IMR-90 (cell line): ENCODE measurements at regions of chr11 and their contacts with region 1.

Region 1: DNA sequence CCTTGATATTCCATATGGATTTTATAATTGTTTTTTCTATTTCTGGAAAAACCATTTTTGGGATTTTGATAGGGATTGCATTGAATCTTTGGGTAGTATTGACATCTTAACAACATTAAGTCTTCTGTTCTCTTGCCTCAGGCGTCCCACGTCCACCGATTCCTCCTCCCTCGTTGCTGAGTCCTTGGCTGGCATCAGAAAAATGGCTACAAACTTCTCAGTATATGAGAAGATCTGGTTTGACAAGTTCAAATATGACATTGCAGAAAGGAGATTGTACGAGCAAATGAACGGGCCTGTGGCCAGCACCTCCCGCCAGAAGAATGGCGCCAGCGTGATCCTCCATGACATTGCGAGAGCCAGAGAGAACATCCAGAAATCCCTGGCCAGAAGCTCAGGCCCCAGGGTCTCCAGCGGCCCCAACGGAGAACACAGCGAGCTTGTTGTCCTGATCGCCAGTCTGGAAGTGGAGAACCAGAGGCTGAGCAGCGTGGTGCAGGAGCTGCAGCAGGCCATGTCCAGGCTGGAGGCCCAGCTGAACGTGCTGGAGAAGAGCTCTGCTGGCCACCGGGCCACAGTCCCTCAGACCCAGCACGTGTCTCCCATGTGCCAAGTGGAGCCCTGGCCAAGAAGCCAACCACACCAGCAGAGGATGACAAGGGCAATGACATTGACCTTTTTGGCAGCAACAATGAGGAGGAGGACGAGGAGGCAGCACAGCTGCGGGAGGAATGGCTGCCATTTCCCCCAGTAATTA is 20.7 kb upstream of the SCGB1D1 start:
- DNase-seq: no peak
- ATAC-seq: no peak
- H3K4me3 ChIP-seq: no peak overlapping the region
- H3K27ac ChIP-seq: no peak overlapping the region
- H3K4me1 ChIP-seq: no peaks in the 10 kb centered on the region
- H3K27me3 ChIP-seq: peaks cover 26% of the 10 kb centered on the region
- CTCF ChIP-seq: no peak
- POLR2A ChIP-seq: no peak
- RAD21 ChIP-seq: no peak

Region 2: DNA sequence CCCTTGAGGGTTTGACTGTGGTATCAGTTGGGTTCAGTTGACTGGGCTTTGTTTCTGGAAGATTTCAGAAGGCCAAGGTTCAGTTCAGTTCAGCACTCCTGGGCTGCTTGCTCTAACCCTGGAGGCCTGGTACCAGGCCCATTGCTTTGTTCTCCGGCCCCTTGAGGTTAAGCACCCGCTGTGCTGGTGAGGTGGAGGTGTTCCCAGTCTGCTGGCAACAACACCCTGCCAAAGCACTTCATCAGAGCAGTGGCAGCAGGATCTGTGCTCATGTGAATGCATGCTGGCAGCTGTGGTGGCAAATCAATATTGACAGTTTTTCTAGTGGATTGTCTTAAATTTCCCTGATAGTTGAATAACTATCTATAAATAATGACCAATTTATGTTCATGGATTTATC is 16.9 kb after region 1 on chr11:
- CTCF ChIA-PET with region 1: no interaction called
- POLR2A ChIA-PET with region 1: no interaction called
- dilution Hi-C with region 1: no loop called
- in situ Hi-C with region 1: no loop called
- intact Hi-C with region 1: no loop called
- DNase-seq: no peak
- ATAC-seq: no peak
- H3K4me3 ChIP-seq: no peak overlapping the region
- H3K27ac ChIP-seq: no peak overlapping the region
- H3K4me1 ChIP-seq: no peaks in the 10 kb centered on the region
- H3K27me3 ChIP-seq: peaks cover 16% of the 10 kb centered on the region
- CTCF ChIP-seq: no peak
- POLR2A ChIP-seq: no peak
- RAD21 ChIP-seq: no peak

Region 3: GRCh38 chr11:62223095-62223494 is 53.8 kb after region 1 on chr11:
- CTCF ChIA-PET with region 1: no interaction called
- POLR2A ChIA-PET with region 1: no interaction called
- dilution Hi-C with region 1: no loop called
- in situ Hi-C with region 1: loop called (anchors 10 kb)
- intact Hi-C with region 1: no loop called
- DNase-seq: no peak
- ATAC-seq: no peak
- H3K4me3 ChIP-seq: no peak overlapping the region
- H3K27ac ChIP-seq: no peak overlapping the region
- H3K4me1 ChIP-seq: no peaks in the 10 kb centered on the region
- H3K27me3 ChIP-seq: no peaks in the 10 kb centered on the region
- CTCF ChIP-seq: no peak
- POLR2A ChIP-seq: no peak
- RAD21 ChIP-seq: no peak

Region 4: DNA sequence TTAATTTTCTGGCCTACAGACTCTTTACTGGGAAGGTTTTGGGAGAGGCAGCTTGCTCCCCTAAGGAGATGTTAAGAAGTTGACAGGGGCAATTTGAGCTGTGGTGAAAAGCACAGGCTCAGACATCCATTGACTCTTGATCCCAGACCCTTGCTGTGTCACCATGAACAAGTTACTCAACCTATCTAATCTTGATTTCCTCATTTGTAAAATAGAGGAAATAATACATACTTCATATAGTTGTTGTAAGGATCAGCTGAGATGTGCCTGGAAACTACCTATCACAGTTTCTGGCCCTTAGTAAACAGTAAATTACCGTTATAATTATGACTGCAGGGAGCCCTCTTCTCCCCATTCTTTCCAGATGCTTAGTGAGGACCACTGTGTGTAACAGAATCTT is 146.2 kb after region 1 on chr11:
- CTCF ChIA-PET with region 1: no interaction called
- POLR2A ChIA-PET with region 1: no interaction called
- dilution Hi-C with region 1: no loop called
- in situ Hi-C with region 1: loop called (anchors 10 kb)
- intact Hi-C with region 1: loop called (anchors 1 kb)
- DNase-seq: no peak
- ATAC-seq: no peak
- H3K4me3 ChIP-seq: no peak overlapping the region
- H3K27ac ChIP-seq: no peak overlapping the region
- H3K4me1 ChIP-seq: no peaks in the 10 kb centered on the region
- H3K27me3 ChIP-seq: peaks cover 24% of the 10 kb centered on the region
- CTCF ChIP-seq: no peak
- POLR2A ChIP-seq: no peak
- RAD21 ChIP-seq: no peak

Region 5: GRCh38 chr11:62372871-62373270 is 203.6 kb after region 1 on chr11:
- CTCF ChIA-PET with region 1: no interaction called
- POLR2A ChIA-PET with region 1: no interaction called
- dilution Hi-C with region 1: no loop called
- in situ Hi-C with region 1: no loop called
- intact Hi-C with region 1: loop called (anchors 1 kb)
- DNase-seq: no peak
- ATAC-seq: no peak
- H3K4me3 ChIP-seq: no peak overlapping the region
- H3K27ac ChIP-seq: no peak overlapping the region
- H3K4me1 ChIP-seq: no peaks in the 10 kb centered on the region
- H3K27me3 ChIP-seq: peaks cover 14% of the 10 kb centered on the region
- CTCF ChIP-seq: no peak
- POLR2A ChIP-seq: no peak
- RAD21 ChIP-seq: no peak